ENCODE measurements at regions of chr11 and their contacts with region 1.

Region 1: GRCh38 chr11:3905080-3905953 is 49.9 kb downstream of the STIM1 start:
- DNase-seq: peak; percentile 18 to 84 (median 68)
- ATAC-seq: peak; percentile 94
- H3K4me3 ChIP-seq: no peak overlapping the region
- H3K4me3 Mint-ChIP-seq: peak overlapping the region; percentile 16
- H3K27ac ChIP-seq: peak overlapping the region; percentile 26 to 51
- H3K27ac Mint-ChIP-seq: peak overlapping the region; percentile 89
- H3K4me1 ChIP-seq: peaks cover 77% of the 10 kb centered on the region
- H3K4me1 Mint-ChIP-seq: peaks cover 86% of the 10 kb centered on the region
- H3K27me3 ChIP-seq: no peaks in the 10 kb centered on the region
- H3K27me3 Mint-ChIP-seq: no peaks in the 10 kb centered on the region
- CTCF ChIP-seq: no peak

Region 2: GRCh38 chr11:2213384-2213842 is 1691.9 kb before region 1 on chr11:
- CTCF ChIA-PET with region 1: no interaction called
- POLR2A ChIA-PET with region 1: no interaction called
- intact Hi-C with region 1: no loop called
- DNase-seq: peak in 8 of 9 experiments; percentile 16 to 71 (median 44)
- ATAC-seq: peak; percentile 75
- H3K4me3 ChIP-seq: peak overlapping the region; percentile 32 to 39
- H3K4me3 Mint-ChIP-seq: peak overlapping the region; percentile 58
- H3K27ac ChIP-seq: peak overlapping the region; percentile 23 to 70
- H3K27ac Mint-ChIP-seq: peak overlapping the region; percentile 69
- H3K4me1 ChIP-seq: peaks cover 25% of the 10 kb centered on the region
- H3K4me1 Mint-ChIP-seq: peaks cover 15% of the 10 kb centered on the region
- H3K27me3 ChIP-seq: peaks cover 0 to 2% of the 10 kb centered on the region in 2 experiments
- H3K27me3 Mint-ChIP-seq: no peaks in the 10 kb centered on the region
- CTCF ChIP-seq: no peak

Region 3: GRCh38 chr11:3867209-3868091 is 37.9 kb before region 1 on chr11:
- CTCF ChIA-PET with region 1: interaction called, 4 read pairs
- POLR2A ChIA-PET with region 1: no interaction called
- intact Hi-C with region 1: loop called in 1 of 2 experiments (anchors 1 kb)
- DNase-seq: peak in 1 of 9 experiments; percentile 39
- ATAC-seq: peak; percentile 46
- H3K4me3 ChIP-seq: no peak overlapping the region
- H3K4me3 Mint-ChIP-seq: peak overlapping the region; percentile 71
- H3K27ac ChIP-seq: peak overlapping the region in 1 of 2 experiments; percentile 66
- H3K27ac Mint-ChIP-seq: peak overlapping the region; percentile 80
- H3K4me1 ChIP-seq: peaks cover 90% of the 10 kb centered on the region
- H3K4me1 Mint-ChIP-seq: peaks cover 86% of the 10 kb centered on the region
- H3K27me3 ChIP-seq: no peaks in the 10 kb centered on the region
- H3K27me3 Mint-ChIP-seq: no peaks in the 10 kb centered on the region
- CTCF ChIP-seq: no peak

Region 4: GRCh38 chr11:3893311-3893710 is 12.0 kb before region 1 on chr11:
- CTCF ChIA-PET with region 1: no interaction called
- POLR2A ChIA-PET with region 1: interaction called, 6 read pairs
- intact Hi-C with region 1: loop called in 1 of 2 experiments (anchors 1 kb)
- DNase-seq: no peak
- ATAC-seq: no peak
- H3K4me3 ChIP-seq: no peak overlapping the region
- H3K4me3 Mint-ChIP-seq: no peak overlapping the region
- H3K27ac ChIP-seq: no peak overlapping the region
- H3K27ac Mint-ChIP-seq: peak overlapping the region; percentile 88
- H3K4me1 ChIP-seq: peaks cover 35% of the 10 kb centered on the region
- H3K4me1 Mint-ChIP-seq: peaks cover 71% of the 10 kb centered on the region
- H3K27me3 ChIP-seq: no peaks in the 10 kb centered on the region
- H3K27me3 Mint-ChIP-seq: no peaks in the 10 kb centered on the region
- CTCF ChIP-seq: no peak

Region 5: GRCh38 chr11:3920148-3920852 is 15.0 kb after region 1 on chr11:
- CTCF ChIA-PET with region 1: interaction called, 3 read pairs
- POLR2A ChIA-PET with region 1: no interaction called
- intact Hi-C with region 1: loop called in 1 of 2 experiments (anchors 1 kb)
- DNase-seq: peak; percentile 4 to 83 (median 71)
- ATAC-seq: peak; percentile 85
- H3K4me3 ChIP-seq: no peak overlapping the region
- H3K4me3 Mint-ChIP-seq: peak overlapping the region; percentile 27
- H3K27ac ChIP-seq: peak overlapping the region in 1 of 2 experiments; percentile 46
- H3K27ac Mint-ChIP-seq: peak overlapping the region; percentile 34
- H3K4me1 ChIP-seq: peaks cover 49% of the 10 kb centered on the region
- H3K4me1 Mint-ChIP-seq: peaks cover 64% of the 10 kb centered on the region
- H3K27me3 ChIP-seq: no peaks in the 10 kb centered on the region
- H3K27me3 Mint-ChIP-seq: no peaks in the 10 kb centered on the region
- CTCF ChIP-seq: no peak

Region 6: DNA sequence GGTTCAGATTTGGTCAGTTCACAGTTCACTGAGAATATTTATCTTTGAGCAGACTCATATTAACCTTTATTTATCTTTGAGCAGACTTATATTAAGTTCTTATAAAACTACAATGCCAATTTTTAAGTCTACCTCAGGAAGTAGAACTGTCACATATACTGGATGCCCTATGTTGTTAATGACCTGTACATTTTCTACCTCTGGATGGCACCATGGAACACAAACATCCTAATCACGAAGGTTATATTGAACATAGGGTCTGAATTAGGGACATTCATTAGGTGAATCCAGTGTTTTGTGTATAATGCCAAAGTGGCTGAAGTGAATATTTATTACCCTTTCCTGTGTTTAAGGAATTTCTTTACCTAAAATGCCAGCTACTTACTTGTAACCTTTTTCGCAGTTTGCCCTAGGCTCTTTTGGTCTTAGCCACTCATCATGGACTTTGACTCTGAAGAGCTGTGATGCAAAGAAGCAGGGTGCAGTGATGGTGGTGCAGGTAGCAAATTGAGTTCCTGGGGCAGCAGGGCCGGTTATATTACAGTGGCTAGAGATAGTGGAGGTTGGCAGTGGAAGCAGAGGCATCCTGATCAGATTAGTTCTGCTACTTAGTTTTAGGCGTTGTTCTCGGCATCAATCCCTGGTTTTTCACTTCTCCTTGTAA is 21.9 kb after region 1 on chr11:
- CTCF ChIA-PET with region 1: no interaction called
- POLR2A ChIA-PET with region 1: no interaction called
- intact Hi-C with region 1: loop called in 1 of 2 experiments (anchors 2 kb)
- DNase-seq: no peak
- ATAC-seq: no peak
- H3K4me3 ChIP-seq: no peak overlapping the region
- H3K4me3 Mint-ChIP-seq: no peak overlapping the region
- H3K27ac ChIP-seq: no peak overlapping the region
- H3K27ac Mint-ChIP-seq: peak overlapping the region; percentile 1
- H3K4me1 ChIP-seq: peaks cover 19% of the 10 kb centered on the region
- H3K4me1 Mint-ChIP-seq: peaks cover 60% of the 10 kb centered on the region
- H3K27me3 ChIP-seq: no peaks in the 10 kb centered on the region
- H3K27me3 Mint-ChIP-seq: no peaks in the 10 kb centered on the region
- CTCF ChIP-seq: no peak

Region 7: DNA sequence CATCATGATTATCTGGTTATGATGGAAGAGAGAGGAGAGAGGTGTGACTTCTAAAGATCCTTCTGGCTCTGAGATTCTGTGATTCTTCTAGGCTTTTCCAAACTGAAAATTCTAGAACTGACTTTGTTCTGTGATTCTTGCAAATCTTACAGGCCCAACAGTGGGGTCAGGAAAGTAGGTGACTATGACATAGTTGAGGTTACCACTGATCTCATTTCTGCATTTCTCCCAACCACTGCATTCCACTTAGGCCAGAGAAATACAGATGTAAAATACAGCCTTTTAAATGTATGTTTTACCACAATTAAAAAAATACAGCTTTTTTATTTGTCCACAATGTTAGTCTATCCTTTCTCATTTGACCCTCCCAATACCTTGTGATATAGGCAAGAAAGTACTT is 33.9 kb after region 1 on chr11:
- CTCF ChIA-PET with region 1: no interaction called
- POLR2A ChIA-PET with region 1: no interaction called
- intact Hi-C with region 1: loop called in 1 of 2 experiments (anchors 2 kb)
- DNase-seq: no peak
- ATAC-seq: peak; percentile 26
- H3K4me3 ChIP-seq: no peak overlapping the region
- H3K4me3 Mint-ChIP-seq: no peak overlapping the region
- H3K27ac ChIP-seq: no peak overlapping the region
- H3K27ac Mint-ChIP-seq: peak overlapping the region; percentile 78
- H3K4me1 ChIP-seq: peaks cover 61% of the 10 kb centered on the region
- H3K4me1 Mint-ChIP-seq: peaks cover 92% of the 10 kb centered on the region
- H3K27me3 ChIP-seq: no peaks in the 10 kb centered on the region
- H3K27me3 Mint-ChIP-seq: no peaks in the 10 kb centered on the region
- CTCF ChIP-seq: no peak

Measured in CD8-positive, alpha-beta T cell (primary cell).